ENCODE measurements at regions of chr10 and their contacts with region 1.

Region 1: DNA sequence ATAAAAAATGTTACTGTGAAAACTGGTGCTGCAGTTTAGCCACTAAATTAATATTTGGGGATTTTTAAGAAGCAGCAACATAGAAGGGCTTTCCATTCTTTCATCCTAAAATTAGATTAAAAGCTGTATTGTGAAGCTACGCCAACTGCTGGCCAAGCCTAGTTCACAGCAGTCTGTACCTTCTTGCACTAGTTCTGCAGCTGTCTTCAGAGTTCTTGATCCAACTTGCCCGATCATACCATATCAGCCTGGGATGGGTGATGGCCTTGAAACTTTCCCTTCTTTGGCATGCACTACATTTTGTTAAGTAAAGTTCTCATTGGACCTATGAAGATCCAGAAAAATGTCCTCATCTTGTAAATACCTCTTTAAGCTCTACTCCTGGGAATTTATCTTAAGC is 20.3 kb upstream of the PANK1 start:
- DNase-seq: no peak
- CTCF ChIP-seq: no peak

Region 2: GRCh38 chr10:89391917-89392756 is 273.2 kb before region 1 on chr10 and contains the start of gene IFIT1:
- CTCF ChIA-PET with region 1: no interaction called
- POLR2A ChIA-PET with region 1: no interaction called
- DNase-seq: peak; percentile 59
- CTCF ChIP-seq: no peak

Region 3: DNA sequence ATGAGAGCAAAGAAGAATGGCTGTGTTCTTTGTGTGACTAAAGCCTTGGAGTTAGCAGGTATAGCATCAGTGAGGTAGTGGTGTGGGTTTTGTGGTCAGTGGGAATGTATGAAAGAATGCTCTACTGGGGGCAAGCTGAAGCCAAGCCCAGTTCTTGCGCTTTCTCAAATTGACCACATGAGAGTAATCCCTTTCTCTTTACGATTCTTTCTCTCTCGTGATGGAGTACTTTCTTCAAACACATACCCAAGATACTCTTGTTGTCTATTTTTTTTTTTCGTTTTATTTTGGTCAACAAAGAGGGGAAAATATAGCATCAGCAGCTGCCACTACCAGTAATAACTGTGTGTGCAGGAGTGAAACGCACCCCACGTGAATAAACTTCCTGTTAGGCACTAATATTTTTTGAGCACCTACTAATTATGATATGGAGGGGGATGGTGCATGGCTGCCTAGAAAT is 11.9 kb before region 1 on chr10:
- CTCF ChIA-PET with region 1: interaction called, 24 read pairs
- POLR2A ChIA-PET with region 1: no interaction called
- DNase-seq: peak; percentile 18
- CTCF ChIP-seq: no peak

Measured in GM10248 (cell line).